ENCODE measurements at regions of chrX and their contacts with region 1.

Region 1: DNA sequence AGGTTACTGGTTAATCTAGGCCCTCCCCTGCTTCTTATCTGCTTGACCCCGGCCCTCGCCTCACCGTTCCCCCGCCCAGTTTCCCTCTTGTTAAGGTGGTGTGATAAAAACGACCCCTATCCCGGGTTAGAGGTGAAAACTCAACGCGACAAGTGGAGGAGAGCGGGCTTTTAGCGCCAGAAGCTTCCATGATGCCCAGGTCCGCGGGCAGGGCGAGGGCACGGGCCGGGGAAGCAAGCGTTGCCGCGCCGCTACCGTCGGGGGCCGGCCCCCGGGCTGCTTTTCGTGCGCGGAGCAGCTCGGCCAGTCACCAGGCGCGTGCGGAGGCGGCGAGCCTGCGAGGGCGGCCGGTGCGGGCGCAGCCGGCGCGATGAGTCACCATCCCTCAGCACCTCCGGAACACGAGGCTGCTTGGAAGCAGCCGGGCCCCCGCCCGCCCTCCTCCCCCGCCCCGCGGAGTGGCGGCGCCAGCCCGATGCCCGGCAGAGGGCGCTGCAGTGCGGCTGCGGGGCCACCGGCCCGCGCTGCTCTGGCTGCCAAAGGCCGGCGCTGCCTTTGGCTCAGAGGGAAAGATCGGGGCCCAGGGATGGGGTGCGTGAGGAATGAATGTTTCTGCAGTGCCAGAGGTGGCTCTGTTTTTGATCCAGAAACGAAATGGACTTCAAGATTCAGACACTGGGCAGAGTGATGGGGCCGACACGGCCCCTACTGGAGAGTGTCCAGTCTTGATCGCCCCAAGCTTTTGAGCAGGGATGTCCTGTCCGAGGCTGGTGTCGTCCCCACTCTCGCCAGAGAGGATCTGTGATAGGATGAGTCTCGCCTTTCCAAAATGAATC is 107.8 kb downstream of the NHSL2 start:
- DNase-seq: peak; percentile 84
- H3K4me3 Mint-ChIP-seq: no peak overlapping the region
- H3K27ac Mint-ChIP-seq: no peak overlapping the region
- H3K4me1 Mint-ChIP-seq: peaks cover 25% of the 10 kb centered on the region
- H3K27me3 Mint-ChIP-seq: peaks cover 10% of the 10 kb centered on the region

Region 2: GRCh38 chrX:71178908-71179307 is 839.6 kb before region 1 on chrX:
- CTCF ChIA-PET with region 1: no interaction called
- intact Hi-C with region 1: no loop called
- DNase-seq: peak; percentile 53
- H3K4me3 Mint-ChIP-seq: no peak overlapping the region
- H3K27ac Mint-ChIP-seq: peak overlapping the region; percentile 46
- H3K4me1 Mint-ChIP-seq: peaks cover 17% of the 10 kb centered on the region
- H3K27me3 Mint-ChIP-seq: no peaks in the 10 kb centered on the region

Region 3: GRCh38 chrX:71458866-71459265 is 559.6 kb before region 1 on chrX:
- CTCF ChIA-PET with region 1: no interaction called
- intact Hi-C with region 1: no loop called
- DNase-seq: no peak
- H3K4me3 Mint-ChIP-seq: no peak overlapping the region
- H3K27ac Mint-ChIP-seq: no peak overlapping the region
- H3K4me1 Mint-ChIP-seq: no peaks in the 10 kb centered on the region
- H3K27me3 Mint-ChIP-seq: no peaks in the 10 kb centered on the region

Region 4: GRCh38 chrX:71599965-71600364 is 418.5 kb before region 1 on chrX:
- CTCF ChIA-PET with region 1: no interaction called
- intact Hi-C with region 1: no loop called
- DNase-seq: no peak
- H3K4me3 Mint-ChIP-seq: no peak overlapping the region
- H3K27ac Mint-ChIP-seq: no peak overlapping the region
- H3K4me1 Mint-ChIP-seq: peaks cover 17% of the 10 kb centered on the region
- H3K27me3 Mint-ChIP-seq: no peaks in the 10 kb centered on the region

Region 5: GRCh38 chrX:71910986-71911730 is 107.3 kb before region 1 on chrX:
- CTCF ChIA-PET with region 1: interaction called, 3 read pairs
- intact Hi-C with region 1: loop called (anchors 1 kb)
- DNase-seq: peak; percentile 30
- H3K4me3 Mint-ChIP-seq: peak overlapping the region; percentile 43
- H3K27ac Mint-ChIP-seq: no peak overlapping the region
- H3K4me1 Mint-ChIP-seq: peaks cover 2% of the 10 kb centered on the region
- H3K27me3 Mint-ChIP-seq: peaks cover 34% of the 10 kb centered on the region

Region 6: DNA sequence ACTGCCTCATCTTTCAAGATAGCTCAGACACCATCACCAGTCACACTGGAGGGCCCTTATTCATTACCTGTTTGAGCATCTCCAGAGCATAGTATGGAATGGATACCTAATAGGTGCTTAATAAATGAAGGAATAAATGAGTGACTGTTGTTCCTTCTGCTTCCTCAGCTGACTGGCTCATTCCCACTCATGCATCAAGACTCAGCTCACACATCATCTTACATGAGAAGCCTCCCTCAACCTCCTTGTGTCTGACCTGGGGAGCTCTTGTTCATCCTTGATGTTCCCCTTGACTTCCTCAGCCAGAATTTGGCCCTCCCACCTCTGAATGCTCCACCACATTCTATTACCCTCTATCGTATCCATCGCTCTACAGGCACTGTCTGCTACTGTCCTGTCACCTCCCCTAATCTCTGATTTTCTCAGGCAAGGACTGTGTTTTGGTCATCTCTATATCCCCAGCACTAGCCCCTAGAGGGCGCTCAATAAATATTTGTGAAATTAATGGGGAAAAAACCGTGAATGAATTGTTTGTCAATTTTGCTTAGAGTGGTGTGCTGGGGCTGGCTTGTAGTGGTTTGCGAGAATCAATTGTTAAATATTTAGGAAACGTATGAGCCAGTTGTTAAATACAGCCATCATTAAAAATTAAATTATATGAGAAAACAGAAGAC is 19.5 kb before region 1 on chrX:
- CTCF ChIA-PET with region 1: interaction called, 19 read pairs
- intact Hi-C with region 1: loop called (anchors 1 kb)
- DNase-seq: peak; percentile 49
- H3K4me3 Mint-ChIP-seq: no peak overlapping the region
- H3K27ac Mint-ChIP-seq: no peak overlapping the region
- H3K4me1 Mint-ChIP-seq: no peaks in the 10 kb centered on the region
- H3K27me3 Mint-ChIP-seq: no peaks in the 10 kb centered on the region

Region 7: GRCh38 chrX:72100824-72101351 is 82.4 kb after region 1 on chrX:
- CTCF ChIA-PET with region 1: interaction called, 3 read pairs
- intact Hi-C with region 1: loop called (anchors 2 kb)
- DNase-seq: peak; percentile 77
- H3K4me3 Mint-ChIP-seq: no peak overlapping the region
- H3K27ac Mint-ChIP-seq: no peak overlapping the region
- H3K4me1 Mint-ChIP-seq: peaks cover 31% of the 10 kb centered on the region
- H3K27me3 Mint-ChIP-seq: peaks cover 17% of the 10 kb centered on the region

Region 8: GRCh38 chrX:72269671-72270251 is 251.3 kb after region 1 on chrX:
- CTCF ChIA-PET with region 1: no interaction called
- intact Hi-C with region 1: loop called (anchors 10 kb)
- DNase-seq: peak; percentile 57
- H3K4me3 Mint-ChIP-seq: no peak overlapping the region
- H3K27ac Mint-ChIP-seq: peak overlapping the region; percentile 84
- H3K4me1 Mint-ChIP-seq: peaks cover 43% of the 10 kb centered on the region
- H3K27me3 Mint-ChIP-seq: no peaks in the 10 kb centered on the region

Region 9: DNA sequence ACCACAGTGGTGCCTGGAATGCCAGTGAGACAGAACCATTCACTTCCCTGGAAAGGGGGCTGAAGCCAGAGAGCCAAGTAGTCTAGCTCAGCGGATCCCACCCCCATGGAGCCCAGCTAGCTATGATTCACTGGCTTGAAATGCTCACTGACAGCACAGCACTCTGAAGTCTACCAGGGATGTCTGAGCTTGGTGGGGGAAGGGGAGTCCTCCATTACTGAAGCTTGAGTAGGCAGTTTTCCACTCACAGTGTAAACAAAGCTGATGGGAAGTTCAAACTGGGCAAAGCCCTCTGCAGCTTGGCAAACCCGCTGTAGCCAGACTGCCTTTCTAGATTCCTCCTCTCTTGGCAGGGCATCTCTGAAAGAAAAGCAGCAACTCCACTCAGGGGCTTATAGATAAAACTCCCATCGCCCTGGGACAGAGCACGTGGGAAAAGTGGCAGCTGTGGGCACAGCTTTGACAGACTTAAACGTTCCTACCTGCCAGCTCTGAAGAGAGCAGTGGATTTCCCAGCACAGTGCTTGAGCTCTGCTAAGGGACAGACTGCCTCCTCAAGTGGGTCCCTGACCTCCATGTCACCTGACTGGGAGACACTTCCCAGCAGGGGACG is 1164.1 kb after region 1 on chrX:
- CTCF ChIA-PET with region 1: no interaction called
- intact Hi-C with region 1: no loop called
- DNase-seq: no peak
- H3K4me3 Mint-ChIP-seq: no peak overlapping the region
- H3K27ac Mint-ChIP-seq: no peak overlapping the region
- H3K4me1 Mint-ChIP-seq: no peaks in the 10 kb centered on the region
- H3K27me3 Mint-ChIP-seq: peaks cover 3% of the 10 kb centered on the region

Measured in activated naive CD4-positive, alpha-beta T cell treated with anti-CD3 and anti-CD28 coated beads for 36 hours (primary cell).